Activated naive CD8-positive, alpha-beta T cell treated with anti-CD3 and anti-CD28 coated beads, Interleukin-2, amount 10 ng/mL, durations not matched to agents 7 days and 5 days (primary cell): ENCODE measurements at regions of chr6 and their contacts with region 1.

Region 1: GRCh38 chr6:73520688-73521350 is at the start of gene EEF1A1:
- DNase-seq: peak; percentile 92
- ATAC-seq: peak; percentile 77
- H3K4me3 Mint-ChIP-seq: peak within 1 kb of the TSS; percentile 94
- H3K27ac Mint-ChIP-seq: peak within 1 kb of the TSS; percentile 95
- H3K4me1 Mint-ChIP-seq: peaks cover 45% of the 10 kb centered on the region
- H3K27me3 Mint-ChIP-seq: no peaks in the 10 kb centered on the region
- total RNA-seq, gene EEF1A1: 8,804 to 9,235 TPM

Region 2: GRCh38 chr6:73400656-73401055 is 120.2 kb before region 1 on chr6:
- POLR2A ChIA-PET with region 1: no interaction called
- DNase-seq: no peak
- ATAC-seq: no peak
- H3K4me3 Mint-ChIP-seq: no peak overlapping the region
- H3K27ac Mint-ChIP-seq: no peak overlapping the region
- H3K4me1 Mint-ChIP-seq: no peaks in the 10 kb centered on the region
- H3K27me3 Mint-ChIP-seq: peaks cover 12% of the 10 kb centered on the region

Region 3: DNA sequence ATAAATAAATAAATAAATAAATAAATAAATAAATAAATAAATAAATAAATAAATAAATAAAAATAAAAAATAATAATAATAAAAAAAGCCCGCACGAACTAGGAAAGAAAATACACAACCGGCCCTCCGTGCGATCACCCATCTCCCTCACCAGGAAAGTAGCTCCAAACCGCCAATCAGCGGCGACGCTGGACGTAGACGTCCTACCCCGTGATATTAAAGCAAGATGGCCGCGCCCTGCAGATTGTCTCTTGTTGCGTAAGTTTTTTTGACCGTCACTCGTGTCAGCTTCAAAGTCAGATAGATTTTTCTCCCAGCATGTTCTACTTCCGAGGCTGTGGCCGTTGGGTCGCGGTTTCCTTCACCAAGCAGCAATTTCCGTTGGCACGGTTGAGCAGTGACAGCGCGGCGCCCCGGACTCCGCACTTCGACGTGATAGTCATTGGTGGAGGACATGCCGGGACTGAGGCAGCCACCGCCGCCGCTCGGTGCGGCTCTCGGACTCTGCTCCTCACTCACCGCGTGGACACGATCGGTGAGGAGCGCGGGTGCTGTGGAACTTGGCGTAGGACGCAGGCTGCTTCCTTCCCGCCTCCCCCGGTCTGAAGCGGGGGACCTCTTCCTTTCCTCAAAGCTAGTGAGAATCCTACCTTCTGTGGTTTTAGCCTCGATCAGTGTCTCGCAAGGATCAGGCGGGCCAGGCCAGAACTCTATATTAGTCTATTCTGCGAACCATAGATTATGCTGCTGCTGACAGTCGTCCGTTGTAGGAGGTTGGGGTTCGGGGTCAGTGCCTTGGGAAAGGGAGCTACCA is 59.1 kb before region 1 on chr6 and contains the start of gene MTO1:
- POLR2A ChIA-PET with region 1: interaction called, 41 read pairs
- DNase-seq: peak; percentile 82
- ATAC-seq: peak; percentile 92
- H3K4me3 Mint-ChIP-seq: peak within 1 kb of the TSS; percentile 95
- H3K27ac Mint-ChIP-seq: peak within 1 kb of the TSS; percentile 99
- H3K4me1 Mint-ChIP-seq: peaks cover 41% of the 10 kb centered on the region
- H3K27me3 Mint-ChIP-seq: no peaks in the 10 kb centered on the region
- total RNA-seq, gene MTO1: 65.4 to 70.4 TPM

Region 4: GRCh38 chr6:73509851-73510250 is 11.0 kb before region 1 on chr6:
- POLR2A ChIA-PET with region 1: no interaction called
- DNase-seq: no peak
- ATAC-seq: no peak
- H3K4me3 Mint-ChIP-seq: no peak overlapping the region
- H3K27ac Mint-ChIP-seq: no peak overlapping the region
- H3K4me1 Mint-ChIP-seq: peaks cover 5% of the 10 kb centered on the region
- H3K27me3 Mint-ChIP-seq: no peaks in the 10 kb centered on the region

Region 5: DNA sequence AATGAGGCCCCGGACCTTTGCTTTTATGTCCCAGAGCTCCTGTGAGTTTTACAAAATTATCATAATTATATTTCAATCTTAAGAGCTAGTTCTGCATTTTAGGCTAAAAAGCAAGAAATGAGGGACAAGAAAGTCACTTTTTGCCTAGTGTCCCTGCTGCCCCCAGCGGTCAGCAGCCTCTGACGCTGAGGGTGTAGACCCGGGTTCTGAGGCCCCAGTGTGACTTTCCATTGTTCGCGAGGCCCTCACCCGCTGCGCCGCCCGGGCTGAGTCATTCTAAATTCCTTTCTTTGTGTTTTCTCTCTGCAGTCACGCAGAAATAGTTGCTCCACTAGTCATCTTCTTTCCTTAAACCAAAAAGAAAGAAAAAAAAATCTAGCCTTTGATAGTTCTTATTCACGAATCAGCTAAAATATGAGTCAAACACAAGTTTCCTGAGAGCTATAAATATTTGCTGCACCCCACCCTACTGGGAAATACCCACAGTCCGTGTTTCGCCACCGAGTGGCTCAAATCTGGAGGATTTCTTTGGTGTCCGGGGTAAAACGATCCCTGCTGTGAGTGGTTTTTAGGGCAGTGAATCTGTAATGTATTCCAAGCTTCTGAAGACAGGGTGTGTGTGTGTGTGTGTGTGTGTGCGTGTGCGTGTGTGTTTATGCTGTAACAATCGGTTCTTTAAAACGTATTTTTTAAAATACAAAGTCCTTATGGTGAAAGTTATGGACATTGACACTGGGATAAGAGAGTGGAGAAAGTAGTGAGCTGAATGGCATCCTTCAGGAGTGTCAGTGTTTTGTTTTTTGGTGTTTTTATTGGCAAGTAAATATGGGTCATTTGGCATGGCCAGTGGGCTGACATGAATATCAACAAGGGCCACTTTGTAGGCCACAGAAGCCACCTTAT is 59.7 kb after region 1 on chr6:
- POLR2A ChIA-PET with region 1: interaction called, 145 read pairs
- DNase-seq: peak; percentile 56
- ATAC-seq: peak; percentile 71
- H3K4me3 Mint-ChIP-seq: peak overlapping the region; percentile 55
- H3K27ac Mint-ChIP-seq: peak overlapping the region; percentile 91
- H3K4me1 Mint-ChIP-seq: peaks cover 17% of the 10 kb centered on the region
- H3K27me3 Mint-ChIP-seq: no peaks in the 10 kb centered on the region

Region 6: GRCh38 chr6:73610444-73611275 is 89.8 kb after region 1 on chr6:
- POLR2A ChIA-PET with region 1: interaction called, 27 read pairs
- DNase-seq: no peak
- ATAC-seq: no peak
- H3K4me3 Mint-ChIP-seq: no peak overlapping the region
- H3K27ac Mint-ChIP-seq: no peak overlapping the region
- H3K4me1 Mint-ChIP-seq: peaks cover 2% of the 10 kb centered on the region
- H3K27me3 Mint-ChIP-seq: no peaks in the 10 kb centered on the region

Region 7: GRCh38 chr6:74631564-74631963 is 1110.7 kb after region 1 on chr6:
- POLR2A ChIA-PET with region 1: no interaction called
- DNase-seq: no peak
- ATAC-seq: no peak
- H3K4me3 Mint-ChIP-seq: no peak overlapping the region
- H3K27ac Mint-ChIP-seq: no peak overlapping the region
- H3K4me1 Mint-ChIP-seq: no peaks in the 10 kb centered on the region
- H3K27me3 Mint-ChIP-seq: no peaks in the 10 kb centered on the region